HAP-1 (cell line): ENCODE measurements at regions of chr15 and their contacts with region 1.

Region 1: DNA sequence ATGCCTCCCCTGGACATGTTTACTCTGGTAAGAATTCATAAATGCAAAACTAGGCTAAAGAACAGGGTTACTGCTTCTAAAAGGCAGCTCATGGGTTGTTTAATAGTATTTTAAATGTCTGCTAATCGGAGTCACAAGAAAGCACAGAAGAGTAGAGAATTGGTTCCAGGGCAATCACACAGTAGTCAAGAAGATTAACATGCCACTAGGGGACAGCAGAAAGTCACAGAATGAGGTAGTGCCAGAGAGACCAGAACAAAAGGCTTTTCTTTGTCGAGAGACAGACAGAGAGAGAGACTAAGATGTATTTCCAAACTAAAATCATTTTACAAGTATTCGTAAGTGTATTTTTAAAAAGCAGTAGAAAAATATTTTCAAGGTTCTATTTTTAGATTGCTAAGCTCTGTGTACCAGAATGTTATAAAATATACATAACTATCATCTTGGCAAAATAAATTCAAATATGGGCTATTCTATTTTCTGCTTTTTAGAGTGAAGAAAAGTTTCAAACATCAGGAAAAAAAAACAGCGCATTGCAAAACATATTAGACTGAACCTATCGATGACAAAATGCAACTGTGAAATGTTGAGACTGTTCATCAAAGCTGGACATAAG is 78.3 kb upstream of the CDIN1 start:
- DNase-seq: peak; percentile 68 to 94
- H3K4me3 ChIP-seq: no peak overlapping the region
- H3K4me1 ChIP-seq: peaks cover 46% of the 10 kb centered on the region
- H3K27me3 ChIP-seq: no peaks in the 10 kb centered on the region

Region 2: GRCh38 chr15:35545824-35546510 is 955.2 kb before region 1 on chr15 and contains the start of gene DPH6:
- in situ Hi-C with region 1: loop called (anchors 25 kb)
- DNase-seq: peak; percentile 81 to 85
- H3K4me3 ChIP-seq: peak within 1 kb of the TSS; percentile 64
- H3K4me1 ChIP-seq: peaks cover 34% of the 10 kb centered on the region
- H3K27me3 ChIP-seq: no peaks in the 10 kb centered on the region